ENCODE measurements at regions of chr9 and their contacts with region 1.

Region 1: DNA sequence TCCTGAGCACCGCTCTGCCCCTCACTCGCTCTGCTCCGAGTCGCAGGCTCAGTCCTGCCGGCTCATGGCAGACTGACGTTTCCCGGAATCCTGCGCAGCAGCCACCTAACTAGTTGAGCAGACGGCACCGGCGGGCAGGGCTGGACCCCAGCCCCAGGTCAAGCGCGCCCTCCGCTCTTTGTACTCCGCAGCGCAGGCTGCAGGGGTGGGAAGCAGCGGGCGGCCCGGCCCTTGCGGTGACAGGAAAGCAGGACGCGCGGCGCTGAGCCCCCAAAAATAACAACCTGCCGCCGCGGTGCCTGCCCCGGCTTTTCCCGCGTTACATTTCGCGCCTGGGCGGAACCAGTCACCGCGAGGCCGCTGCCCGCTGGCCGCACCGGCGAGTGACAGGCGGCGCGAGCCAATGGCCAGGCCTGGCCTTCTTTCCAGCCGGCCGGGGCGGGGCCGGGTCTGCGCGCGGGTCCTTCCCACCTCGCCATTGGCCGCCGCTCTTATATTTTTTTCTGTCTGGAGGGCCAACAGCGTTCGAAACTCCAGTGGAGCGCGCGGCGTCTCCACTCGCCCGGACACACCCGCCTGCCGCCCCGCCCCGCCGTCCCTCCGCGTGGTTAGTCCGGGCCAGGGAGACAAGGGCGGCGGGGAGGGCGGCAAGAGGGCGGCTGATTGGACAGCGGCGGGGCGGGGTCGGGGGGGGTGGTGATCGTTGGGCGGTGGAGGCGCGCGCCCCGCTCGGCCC is at the start of gene ZNF367:
- DNase-seq: peak; percentile 89
- ATAC-seq: peak; percentile 76
- H3K4me3 Mint-ChIP-seq: peak within 1 kb of the TSS; percentile 93
- H3K27ac Mint-ChIP-seq: peak within 1 kb of the TSS; percentile 92
- H3K4me1 Mint-ChIP-seq: peaks cover 44% of the 10 kb centered on the region
- H3K27me3 Mint-ChIP-seq: no peaks in the 10 kb centered on the region
- CTCF ChIP-seq: no peak
- total RNA-seq, gene ZNF367: 4.0 and 4.3 TPM in 2 replicates

Region 2: DNA sequence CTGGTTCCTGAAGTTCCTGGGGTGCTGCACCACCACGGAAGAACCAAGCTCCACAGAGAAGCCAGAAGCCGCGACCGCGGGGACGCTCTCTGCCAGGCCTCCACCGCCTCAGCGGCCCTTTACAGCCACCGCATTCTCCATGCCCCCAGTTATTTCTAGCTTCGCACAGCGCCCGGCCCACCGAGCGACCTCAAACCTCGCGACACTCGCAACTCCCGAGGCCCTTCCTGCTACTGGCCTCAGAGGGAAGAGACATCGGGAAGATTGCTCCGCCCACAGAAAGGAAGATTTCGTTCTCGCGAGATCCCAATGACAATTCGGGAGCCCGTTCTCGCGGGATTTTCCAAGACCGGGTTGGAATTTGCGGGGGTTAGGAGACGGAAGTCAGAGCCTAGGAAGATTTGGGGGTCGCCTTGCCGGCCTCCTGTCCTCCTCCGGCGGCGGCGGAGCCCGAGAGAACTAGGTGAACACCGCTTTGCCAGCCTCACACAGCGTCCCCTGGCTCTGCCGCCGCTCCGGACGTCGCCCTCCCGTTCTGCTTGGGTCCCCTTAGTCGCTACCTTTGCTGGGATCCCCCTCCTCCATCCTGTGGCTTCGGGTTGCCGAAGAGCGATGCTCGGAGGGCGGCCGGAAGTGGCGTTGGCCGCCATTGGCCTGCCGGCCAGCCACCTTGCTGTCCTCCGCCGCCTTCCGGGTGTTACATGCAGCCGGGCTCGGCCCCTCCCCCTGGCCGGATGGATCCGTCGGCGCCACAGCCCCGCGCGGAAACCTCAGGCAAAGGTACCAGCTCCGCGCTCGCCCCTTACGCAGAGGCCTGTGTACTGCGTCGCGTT is 542.7 kb before region 1 on chr9 and contains the start of gene ERCC6L2:
- CTCF ChIA-PET with region 1: no interaction called
- POLR2A ChIA-PET with region 1: interaction called, 3 read pairs
- intact Hi-C with region 1: loop called (anchors 1 kb)
- DNase-seq: peak; percentile 89
- ATAC-seq: peak; percentile 88
- H3K4me3 Mint-ChIP-seq: no peak within 1 kb of the TSS
- H3K27ac Mint-ChIP-seq: no peak within 1 kb of the TSS
- H3K4me1 Mint-ChIP-seq: peaks cover 20% of the 10 kb centered on the region
- H3K27me3 Mint-ChIP-seq: no peaks in the 10 kb centered on the region
- CTCF ChIP-seq: no peak
- total RNA-seq, gene ERCC6L2: 43.2 and 52.3 TPM in 2 replicates

Region 3: DNA sequence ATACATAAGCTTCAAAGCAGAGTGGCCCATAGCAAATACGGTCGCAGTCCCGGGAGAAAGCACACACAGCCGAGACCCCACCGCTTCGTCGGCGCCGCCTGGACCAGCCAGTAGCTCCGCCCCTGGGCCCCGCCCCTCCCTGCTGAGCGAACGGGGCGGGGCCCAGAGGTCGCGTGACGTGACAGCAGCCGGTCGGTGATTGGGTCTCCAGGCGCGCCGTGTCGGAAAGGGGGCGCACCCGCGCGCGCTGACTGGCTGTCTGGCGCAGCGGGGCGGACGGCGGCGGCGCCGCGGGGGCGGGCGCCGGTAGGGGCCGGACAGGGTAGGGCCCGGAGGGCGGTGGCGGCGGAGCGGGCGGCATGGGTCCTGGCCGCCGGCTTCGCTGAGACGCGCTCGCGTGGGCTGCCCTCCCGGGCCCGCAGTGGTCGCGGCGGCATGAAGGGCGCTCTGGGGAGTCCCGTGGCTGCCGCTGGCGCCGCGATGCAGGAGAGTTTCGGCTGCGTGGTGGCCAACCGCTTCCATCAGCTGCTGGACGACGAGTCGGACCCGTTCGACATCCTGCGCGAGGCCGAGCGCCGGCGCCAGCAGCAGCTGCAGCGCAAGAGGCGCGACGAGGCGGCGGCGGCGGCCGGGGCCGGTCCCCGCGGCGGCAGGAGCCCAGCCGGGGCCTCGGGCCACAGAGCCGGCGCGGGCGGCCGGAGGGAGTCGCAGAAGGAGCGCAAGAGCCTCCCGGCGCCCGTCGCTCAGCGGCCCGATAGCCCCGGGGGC is 31.8 kb after region 1 on chr9 and contains the start of gene HABP4:
- CTCF ChIA-PET with region 1: no interaction called
- POLR2A ChIA-PET with region 1: interaction called, 14 read pairs
- intact Hi-C with region 1: loop called (anchors 1 kb)
- DNase-seq: peak; percentile 97
- ATAC-seq: peak; percentile 96
- H3K4me3 Mint-ChIP-seq: peak within 1 kb of the TSS; percentile 87
- H3K27ac Mint-ChIP-seq: peak within 1 kb of the TSS; percentile 71
- H3K4me1 Mint-ChIP-seq: peaks cover 11% of the 10 kb centered on the region
- H3K27me3 Mint-ChIP-seq: peaks cover 3% of the 10 kb centered on the region
- CTCF ChIP-seq: no peak
- total RNA-seq, gene HABP4: 8.1 TPM in 2 replicates

Region 4: DNA sequence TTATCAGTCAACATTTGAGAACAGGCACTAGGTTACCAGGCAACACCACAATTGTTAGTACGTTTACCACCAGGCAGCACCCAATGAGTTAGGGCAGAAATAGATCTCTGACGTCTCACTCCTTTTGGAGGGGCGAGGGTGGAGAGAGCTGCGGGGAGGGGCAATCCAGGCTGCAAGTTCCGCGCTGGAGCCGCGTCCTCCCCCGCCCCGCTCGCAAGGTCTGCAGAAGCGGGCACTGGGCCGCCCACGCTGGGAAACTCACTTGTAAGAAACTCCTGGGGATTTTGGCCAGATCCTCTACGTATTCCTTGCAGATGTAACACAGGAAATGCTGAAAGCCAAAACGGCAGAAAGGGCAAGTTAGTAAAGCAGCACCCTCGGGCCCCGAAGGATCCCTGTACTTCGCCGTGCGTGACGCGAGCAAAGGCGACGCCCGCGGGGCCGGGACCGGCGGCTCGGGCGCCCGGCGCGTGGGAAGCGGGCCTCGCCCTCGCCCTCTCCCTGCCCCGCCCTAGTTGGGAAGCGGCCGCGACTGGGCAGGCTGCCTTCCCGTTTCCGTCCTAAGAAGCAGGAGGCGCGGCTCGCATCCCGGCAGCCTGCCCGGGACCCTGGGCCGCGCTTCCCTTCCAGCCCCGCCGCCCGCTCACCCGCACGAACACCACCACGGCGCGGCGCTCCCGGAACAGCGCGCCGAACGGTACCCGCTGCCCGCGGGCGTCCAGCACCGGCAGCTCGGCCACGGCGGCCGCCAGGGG is 236.4 kb after region 1 on chr9:
- CTCF ChIA-PET with region 1: no interaction called
- POLR2A ChIA-PET with region 1: interaction called, 5 read pairs
- intact Hi-C with region 1: loop called (anchors 1 kb)
- DNase-seq: peak; percentile 58
- ATAC-seq: peak; percentile 64
- H3K4me3 Mint-ChIP-seq: peak overlapping the region; percentile 88
- H3K27ac Mint-ChIP-seq: peak overlapping the region; percentile 86
- H3K4me1 Mint-ChIP-seq: peaks cover 17% of the 10 kb centered on the region
- H3K27me3 Mint-ChIP-seq: no peaks in the 10 kb centered on the region
- CTCF ChIP-seq: no peak

Region 5: DNA sequence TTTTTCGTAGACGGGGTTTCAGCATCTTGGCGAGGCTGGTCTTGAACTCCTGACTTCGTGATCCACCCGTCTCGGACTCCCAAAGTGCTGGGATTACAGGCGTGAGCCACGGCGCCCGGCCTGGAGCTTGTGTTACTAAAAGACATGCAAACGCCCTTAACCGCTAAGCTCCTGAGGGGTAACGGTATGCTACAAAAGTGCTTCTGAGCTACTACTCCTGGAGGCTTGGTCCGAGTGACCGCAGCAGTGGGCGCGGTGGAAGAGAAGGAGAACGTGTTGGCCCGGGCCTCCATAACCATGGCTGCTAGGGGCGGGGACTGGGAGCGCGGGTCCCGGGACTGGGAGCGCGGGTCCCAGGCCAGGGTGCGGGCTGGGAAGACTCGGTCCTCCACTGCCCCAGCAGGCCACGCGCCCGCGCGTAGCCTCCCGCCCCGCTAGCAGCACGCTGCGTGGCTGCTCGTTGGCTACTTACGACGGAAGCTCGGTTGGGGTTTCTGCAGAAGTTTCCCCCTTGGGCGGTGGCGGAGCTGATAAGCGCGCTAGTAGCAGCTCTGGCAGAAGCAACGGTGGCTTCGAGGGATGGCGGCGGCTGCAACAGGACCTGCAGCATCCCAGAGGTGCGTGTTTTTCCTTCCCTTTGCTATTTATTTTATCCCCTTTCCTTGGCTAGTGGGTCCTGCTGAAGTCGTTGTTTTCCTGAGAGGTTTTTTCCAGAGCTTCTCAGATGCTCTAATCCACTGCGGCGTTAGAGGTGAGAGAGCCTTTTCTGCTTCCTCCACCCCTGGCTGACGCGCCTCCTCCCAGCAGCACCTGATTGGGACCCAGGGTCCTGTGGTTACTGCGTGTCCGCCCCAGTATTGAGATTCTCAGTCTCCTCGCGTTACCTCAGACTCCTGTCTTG is 820.0 kb after region 1 on chr9:
- CTCF ChIA-PET with region 1: no interaction called
- POLR2A ChIA-PET with region 1: no interaction called
- intact Hi-C with region 1: loop called (anchors 10 kb)
- DNase-seq: peak; percentile 62
- ATAC-seq: peak; percentile 92
- H3K4me3 Mint-ChIP-seq: peak overlapping the region; percentile 95
- H3K27ac Mint-ChIP-seq: peak overlapping the region; percentile 90
- H3K4me1 Mint-ChIP-seq: peaks cover 18% of the 10 kb centered on the region
- H3K27me3 Mint-ChIP-seq: peaks cover 2% of the 10 kb centered on the region
- CTCF ChIP-seq: no peak

Region 6: DNA sequence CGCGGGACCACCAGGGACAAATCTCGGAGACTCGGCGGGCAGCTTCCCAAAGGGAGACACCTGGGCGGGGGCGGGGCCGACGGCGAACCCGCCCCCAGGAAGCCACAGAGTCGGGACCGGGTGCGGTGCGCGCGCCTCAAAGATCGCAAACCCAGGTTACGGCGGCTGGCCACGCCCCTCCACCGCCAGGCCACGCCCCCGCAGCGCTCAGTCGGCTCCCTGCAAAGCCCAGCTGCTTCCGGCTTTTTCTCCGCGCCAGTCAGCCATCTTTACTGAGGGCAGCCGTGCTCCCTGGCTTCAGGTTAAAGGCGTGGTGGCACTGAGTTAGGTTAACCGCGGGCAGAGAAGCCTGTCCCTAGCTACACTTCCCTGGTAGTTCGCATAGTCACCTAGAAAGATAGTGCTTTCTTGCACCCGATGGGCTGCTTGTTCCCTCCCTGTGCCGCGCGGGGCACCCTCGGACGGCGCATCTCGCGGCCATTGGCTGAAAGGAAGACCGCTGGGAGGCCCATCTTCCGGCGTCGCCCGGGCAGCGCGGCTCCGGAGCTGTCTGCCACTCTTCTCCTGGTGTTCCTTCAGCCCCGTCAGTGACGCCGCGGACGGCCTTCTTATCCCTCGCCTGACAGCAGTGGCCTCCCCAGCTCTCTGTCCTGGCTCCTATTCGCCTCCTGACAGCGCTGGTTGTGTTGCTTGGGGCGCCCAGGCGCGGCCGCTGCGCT is 1837.5 kb after region 1 on chr9 and contains the start of gene TBC1D2:
- CTCF ChIA-PET with region 1: no interaction called
- POLR2A ChIA-PET with region 1: no interaction called
- intact Hi-C with region 1: loop called (anchors 5 kb)
- DNase-seq: peak; percentile 98
- ATAC-seq: peak; percentile 90
- H3K4me3 Mint-ChIP-seq: peak within 1 kb of the TSS; percentile 98
- H3K27ac Mint-ChIP-seq: peak within 1 kb of the TSS; percentile 99
- H3K4me1 Mint-ChIP-seq: peaks cover 13% of the 10 kb centered on the region
- H3K27me3 Mint-ChIP-seq: no peaks in the 10 kb centered on the region
- CTCF ChIP-seq: no peak
- total RNA-seq, gene TBC1D2: 2.1 and 2.7 TPM in 2 replicates